Panc1 (cell line): ENCODE measurements at regions of chr11 and their contacts with region 1.

Region 1: GRCh38 chr11:134253188-134253993 is at the starts of genes ACAD8 and THYN1:
- DNase-seq: peak; percentile 85
- ATAC-seq: peak; percentile 100
- H3K4me3 ChIP-seq: peak within 1 kb of the TSS; percentile 99
- H3K27ac ChIP-seq: peak within 1 kb of the TSS; percentile 96
- H3K4me1 ChIP-seq: peaks cover 17% of the 10 kb centered on the region
- H3K27me3 ChIP-seq: no peaks in the 10 kb centered on the region
- CTCF ChIP-seq: no peak
- total RNA-seq, gene ACAD8: 28.4 TPM
- total RNA-seq, gene THYN1: 33.6 TPM

Region 2: DNA sequence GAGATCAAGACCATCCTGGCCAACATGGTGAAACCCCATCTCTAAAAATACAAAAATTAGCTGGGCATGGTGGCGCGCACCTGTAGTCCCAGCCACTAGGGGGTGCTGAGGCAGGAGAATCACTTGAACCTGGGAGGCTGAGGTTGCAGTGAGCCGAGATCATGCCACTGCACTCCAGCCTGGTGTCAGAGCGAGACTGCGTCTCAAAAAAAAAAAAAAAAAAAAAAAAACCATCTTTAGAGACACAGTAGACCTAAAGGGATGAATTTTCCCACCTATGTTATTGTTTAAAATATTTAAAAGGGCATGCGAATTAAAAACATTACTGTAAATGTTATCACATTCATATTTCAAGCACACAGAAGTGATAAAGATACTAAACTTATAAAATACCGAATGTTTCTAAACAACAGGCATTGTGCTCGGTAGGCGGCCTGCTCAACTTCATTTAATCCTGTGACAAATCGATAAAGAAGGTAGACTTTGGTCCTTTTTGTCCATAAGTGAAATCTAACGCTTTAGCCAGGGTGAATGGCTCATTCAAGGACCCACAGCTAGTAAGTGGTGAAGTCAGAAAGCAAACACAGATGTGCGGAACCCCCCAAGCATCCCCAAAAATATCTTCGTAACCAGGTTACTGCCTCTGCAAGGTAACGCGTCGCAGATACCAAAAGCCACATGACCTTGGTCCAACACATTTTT is 45.7 kb before region 1 on chr11:
- CTCF ChIA-PET with region 1: interaction called, 25 read pairs
- POLR2A ChIA-PET with region 1: no interaction called
- in situ Hi-C with region 1: no loop called
- intact Hi-C with region 1: no loop called
- DNase-seq: no peak
- ATAC-seq: peak; percentile 72; the same call in 1 of the 2 replicates
- H3K4me3 ChIP-seq: no peak overlapping the region
- H3K27ac ChIP-seq: no peak overlapping the region
- H3K4me1 ChIP-seq: no peaks in the 10 kb centered on the region
- H3K27me3 ChIP-seq: no peaks in the 10 kb centered on the region
- CTCF ChIP-seq: peak; percentile 96

Region 3: DNA sequence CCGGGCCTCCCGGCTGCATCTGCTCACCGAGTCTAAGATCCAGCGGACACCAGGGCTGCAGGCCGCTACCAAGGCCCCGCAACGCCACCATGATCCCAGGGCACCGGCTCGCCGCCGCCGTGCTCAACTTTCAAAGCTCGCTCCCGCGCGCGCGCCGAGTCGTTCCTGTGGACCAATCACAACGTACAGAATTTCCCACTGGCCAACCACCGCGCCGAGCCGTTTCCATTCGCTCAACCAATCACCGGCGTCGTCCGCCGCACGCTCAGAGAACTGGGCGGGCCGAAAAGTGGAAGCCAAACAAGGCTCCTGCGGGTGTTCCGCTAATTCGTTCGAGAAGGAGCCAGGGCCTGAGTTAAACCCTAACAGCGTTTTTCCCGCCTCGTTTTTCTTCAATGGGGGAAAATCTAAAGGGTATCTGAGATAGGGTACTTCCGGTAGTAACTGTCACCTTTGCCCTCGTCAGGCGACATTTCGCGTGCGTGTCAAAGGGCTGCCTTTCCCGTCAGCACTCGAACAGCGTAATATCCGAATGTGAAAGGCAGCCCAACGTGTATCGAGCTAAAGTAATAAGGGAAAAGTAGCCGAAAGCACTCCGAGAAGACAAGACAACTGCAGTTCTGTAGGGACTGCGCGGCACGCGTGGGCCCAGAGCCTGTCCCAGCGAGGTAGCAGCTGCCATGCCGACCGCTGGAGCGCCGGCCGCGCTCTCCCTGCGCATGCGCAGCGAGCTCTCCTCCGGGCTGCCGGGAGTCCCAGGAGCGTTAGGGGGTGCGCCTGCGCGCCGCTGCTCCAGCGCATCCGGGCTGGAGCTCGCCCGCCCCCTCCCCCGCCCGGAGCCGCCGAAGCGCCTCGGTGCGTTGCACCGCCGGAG is 29.3 kb before region 1 on chr11 and contains the starts of genes NCAPD3 and VPS26B:
- CTCF ChIA-PET with region 1: no interaction called
- POLR2A ChIA-PET with region 1: interaction called, 3 read pairs
- in situ Hi-C with region 1: no loop called
- intact Hi-C with region 1: loop called (anchors 2 kb)
- DNase-seq: peak; percentile 87
- ATAC-seq: peak; percentile 95
- H3K4me3 ChIP-seq: peak within 1 kb of the TSS; percentile 85 to 96
- H3K27ac ChIP-seq: peak within 1 kb of the TSS; percentile 98
- H3K4me1 ChIP-seq: peaks cover 26% of the 10 kb centered on the region
- H3K27me3 ChIP-seq: no peaks in the 10 kb centered on the region
- CTCF ChIP-seq: no peak
- total RNA-seq, gene NCAPD3: 75.9 TPM
- total RNA-seq, gene VPS26B: 69.4 TPM

Region 4: DNA sequence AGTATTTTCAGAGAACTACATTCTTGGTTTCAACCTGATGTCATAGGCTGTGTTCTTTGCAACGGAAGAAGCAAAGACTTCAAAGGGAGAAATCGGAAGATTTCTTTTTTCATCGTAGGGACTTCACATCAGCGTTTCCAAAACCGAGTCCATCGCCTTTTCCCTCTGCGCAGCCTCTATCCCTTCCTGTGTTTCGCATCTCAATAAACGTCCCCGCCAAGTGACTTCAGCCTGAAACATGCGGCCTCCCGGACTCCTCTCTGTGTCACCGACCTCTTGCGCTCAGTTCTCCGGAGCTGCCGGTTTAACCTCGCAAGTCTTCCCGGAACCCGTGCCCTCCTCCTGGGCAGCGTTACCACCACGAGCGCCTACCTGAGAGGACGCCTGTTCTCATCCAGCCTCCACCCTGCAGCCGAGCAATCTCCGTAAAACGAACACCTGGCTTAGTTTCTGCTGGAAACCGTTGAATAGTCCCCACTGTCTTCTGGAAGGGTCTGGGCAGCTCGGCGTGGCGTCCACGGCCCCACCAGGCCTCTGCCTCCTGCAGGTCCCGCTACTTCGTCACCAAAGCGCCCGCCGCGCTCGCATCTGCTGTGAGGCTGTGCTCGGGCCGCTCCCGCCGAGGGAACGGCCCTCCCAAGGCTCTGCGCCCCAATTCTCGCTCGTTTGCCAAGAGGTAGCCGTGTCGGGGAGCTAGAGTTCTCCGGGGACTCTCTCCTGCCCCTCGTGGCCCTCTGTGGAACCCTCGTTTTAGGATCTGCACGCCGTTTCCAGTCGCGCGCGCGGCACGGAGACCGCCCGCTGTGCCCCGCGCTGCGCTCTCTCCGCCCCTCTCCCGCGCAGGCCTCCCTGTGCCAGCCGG is 22.4 kb after region 1 on chr11 and contains the start of gene GLB1L3:
- CTCF ChIA-PET with region 1: no interaction called
- POLR2A ChIA-PET with region 1: no interaction called
- in situ Hi-C with region 1: no loop called
- intact Hi-C with region 1: no loop called
- DNase-seq: no peak
- ATAC-seq: peak; percentile 76
- H3K4me3 ChIP-seq: peak within 1 kb of the TSS; percentile 30 to 43
- H3K27ac ChIP-seq: no peak within 1 kb of the TSS
- H3K4me1 ChIP-seq: 0 out of 2 replicates have a peak, but pooled peaks cover 2% of the 10 kb centered on the region
- H3K27me3 ChIP-seq: peaks cover 46% of the 10 kb centered on the region
- CTCF ChIP-seq: no peak; the same call in 1 of the 2 replicates
- total RNA-seq, gene GLB1L3: not detected